A673 (cell line): ENCODE measurements at regions of chr1 and their contacts with region 1.

Region 1: DNA sequence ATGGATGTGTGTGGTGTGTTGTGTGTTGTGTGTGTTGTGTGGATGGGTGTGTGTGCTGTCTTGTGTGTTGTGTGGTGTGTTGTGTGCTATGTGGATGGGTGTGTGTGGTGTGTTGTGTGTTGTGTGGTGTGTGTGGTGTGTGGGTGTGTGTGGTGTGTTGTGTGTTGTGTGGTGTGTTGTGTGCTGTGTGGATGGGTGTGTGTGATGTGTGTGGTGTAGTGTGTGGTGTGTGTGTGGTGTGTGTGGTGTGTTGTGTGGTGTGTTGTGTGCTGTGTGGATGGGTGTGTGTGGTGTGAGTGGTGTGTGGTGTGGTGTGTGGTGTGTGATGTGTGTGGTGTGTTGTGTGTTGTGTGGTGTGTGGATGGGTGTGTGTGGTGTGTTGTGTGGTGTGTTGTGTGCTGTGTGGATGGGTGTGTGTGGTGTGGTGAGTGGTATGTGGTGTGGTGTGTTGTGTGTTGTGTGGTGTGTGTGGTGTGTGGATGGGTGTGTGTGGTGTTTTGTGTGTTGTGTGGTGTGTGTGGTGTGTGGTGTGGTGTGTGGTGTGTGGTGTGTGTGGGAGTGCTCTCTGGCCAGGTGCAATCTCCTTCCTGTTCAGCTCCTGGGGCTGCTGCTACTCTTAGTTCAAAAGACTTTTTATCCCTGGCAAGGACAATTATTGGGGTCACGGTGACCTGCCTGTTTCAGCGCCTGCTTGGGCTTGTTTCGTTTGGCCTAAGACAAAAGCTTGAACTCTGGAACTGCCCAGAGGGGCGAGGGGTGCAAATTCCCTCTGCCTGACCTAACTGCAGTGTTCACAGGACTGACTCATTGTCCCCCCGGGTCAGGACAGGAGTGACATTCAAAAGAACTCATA is 101.1 kb downstream of the UBIAD1 start:
- DNase-seq: no peak
- H3K4me3 ChIP-seq: no peak overlapping the region
- H3K27ac ChIP-seq: no peak overlapping the region
- H3K4me1 ChIP-seq: no peaks in the 10 kb centered on the region
- H3K27me3 ChIP-seq: peaks cover 20% of the 10 kb centered on the region
- CTCF ChIP-seq: no peak

Region 2: GRCh38 chr1:11339346-11340232 is 34.5 kb before region 1 on chr1:
- CTCF ChIA-PET with region 1: no interaction called
- POLR2A ChIA-PET with region 1: no interaction called
- intact Hi-C with region 1: no loop called
- DNase-seq: peak; percentile 22
- H3K4me3 ChIP-seq: no peak overlapping the region
- H3K27ac ChIP-seq: no peak overlapping the region
- H3K4me1 ChIP-seq: peaks cover 4% of the 10 kb centered on the region
- H3K27me3 ChIP-seq: peaks cover 31% of the 10 kb centered on the region
- CTCF ChIP-seq: no peak

Region 3: DNA sequence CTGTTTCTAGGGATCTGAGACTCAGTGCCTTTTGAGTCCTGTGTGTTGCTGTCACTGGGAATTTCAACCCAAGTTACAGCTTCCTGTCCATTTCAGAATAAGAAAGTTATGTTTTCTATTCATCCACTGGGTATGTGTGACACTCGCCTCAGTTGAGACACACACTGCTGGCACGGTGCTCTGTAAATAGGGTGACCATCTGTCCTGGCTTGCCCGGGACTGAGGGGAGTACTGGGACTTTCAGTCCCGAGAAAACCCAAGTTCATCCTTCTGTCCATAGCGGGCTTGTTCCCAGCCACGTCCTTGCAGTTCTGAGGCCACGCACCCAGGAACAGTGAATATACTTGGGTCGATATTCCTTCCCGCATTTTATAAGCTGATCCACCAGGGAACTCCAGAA is 48.6 kb after region 1 on chr1:
- CTCF ChIA-PET with region 1: no interaction called
- POLR2A ChIA-PET with region 1: interaction called, 31 read pairs
- intact Hi-C with region 1: no loop called
- DNase-seq: no peak
- H3K4me3 ChIP-seq: no peak overlapping the region
- H3K27ac ChIP-seq: no peak overlapping the region
- H3K4me1 ChIP-seq: no peaks in the 10 kb centered on the region
- H3K27me3 ChIP-seq: peaks cover 19% of the 10 kb centered on the region
- CTCF ChIP-seq: no peak